ENCODE measurements at regions of chr13 and their contacts with region 1.

Region 1: GRCh38 chr13:109786457-109787134 is at the start of gene IRS2:
- DNase-seq: peak; percentile 95 to 99 (median 97)
- H3K4me3 ChIP-seq: peak within 1 kb of the TSS; percentile 51 to 82 (median 64)
- H3K27ac ChIP-seq: peak within 1 kb of the TSS; percentile 69 to 98 (median 91)
- H3K4me1 ChIP-seq: peaks cover 18 to 54% of the 10 kb centered on the region in 2 donors
- H3K27me3 ChIP-seq: no peaks in the 10 kb centered on the region
- CTCF ChIP-seq: peak in 1 of 6 experiments; percentile 20
- POLR2A ChIP-seq: peak; percentile 99 to 100
- total RNA-seq, gene IRS2: 11.0 to 84.2 (median 49.4) TPM

Region 2: GRCh38 chr13:108961542-108962125 is 825.0 kb before region 1 on chr13:
- intact Hi-C with region 1: loop called in 1 of 2 experiments (anchors 5 kb)
- DNase-seq: peak in 2 of 7 donors; percentile 19 to 37
- H3K4me3 ChIP-seq: no peak overlapping the region
- H3K27ac ChIP-seq: no peak overlapping the region
- H3K4me1 ChIP-seq: peaks cover 6 to 12% of the 10 kb centered on the region in 2 donors
- H3K27me3 ChIP-seq: no peaks in the 10 kb centered on the region
- CTCF ChIP-seq: peak; percentile 82 to 93 (median 87)
- POLR2A ChIP-seq: no peak

Region 3: DNA sequence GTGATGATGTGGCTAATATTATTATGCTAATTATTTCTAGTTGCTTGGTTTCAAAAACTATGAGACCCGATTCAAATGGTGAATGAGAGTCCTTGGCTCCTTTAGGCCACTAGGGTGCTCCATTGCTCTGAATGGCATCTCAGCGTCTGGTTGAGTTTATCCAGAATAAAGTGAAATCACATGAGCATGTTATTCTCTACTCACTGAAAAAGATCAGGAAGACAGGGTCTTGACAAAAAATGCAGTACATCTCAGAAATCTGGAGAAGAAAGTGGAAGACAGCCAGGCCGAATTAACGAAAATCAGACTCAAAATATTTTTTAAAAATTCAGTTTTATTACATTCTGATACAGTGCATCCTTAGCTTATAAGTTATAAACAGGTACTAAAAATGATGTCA is 641.0 kb before region 1 on chr13:
- intact Hi-C with region 1: loop called (anchors 10 kb)
- DNase-seq: peak; percentile 48 to 82 (median 65)
- H3K4me3 ChIP-seq: no peak overlapping the region
- H3K27ac ChIP-seq: no peak overlapping the region
- H3K4me1 ChIP-seq: peaks cover 0 to 7% of the 10 kb centered on the region in 2 donors
- H3K27me3 ChIP-seq: no peaks in the 10 kb centered on the region
- CTCF ChIP-seq: peak; percentile 72 to 84 (median 78)
- POLR2A ChIP-seq: no peak

Region 4: DNA sequence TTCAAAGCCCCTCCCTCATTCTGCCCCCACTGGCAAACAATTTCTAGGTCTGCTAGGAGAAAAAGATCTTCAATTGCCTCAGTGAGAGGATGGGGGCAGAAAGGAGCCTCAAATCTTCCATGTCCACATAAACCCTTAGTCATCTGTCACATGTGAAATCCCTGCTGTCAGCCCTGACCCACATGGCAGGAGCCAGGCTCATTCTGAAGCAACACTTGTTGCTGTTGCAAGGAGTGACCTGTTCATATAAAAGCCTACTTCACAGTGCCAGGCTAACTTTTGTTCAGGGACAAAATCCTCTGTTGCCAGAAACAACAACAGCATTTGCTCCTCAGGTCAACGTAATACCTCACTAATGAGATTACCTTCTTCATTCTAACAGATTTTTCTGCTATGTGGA is 70.7 kb before region 1 on chr13:
- intact Hi-C with region 1: loop called (anchors 10 kb)
- DNase-seq: peak; percentile 80 to 94 (median 92)
- H3K4me3 ChIP-seq: no peak overlapping the region
- H3K27ac ChIP-seq: peak overlapping the region; percentile 26 to 73 (median 56)
- H3K4me1 ChIP-seq: peaks cover 32 to 40% of the 10 kb centered on the region in 2 donors
- H3K27me3 ChIP-seq: no peaks in the 10 kb centered on the region
- CTCF ChIP-seq: peak in 4 of 6 experiments; percentile 5 to 41 (median 22)
- POLR2A ChIP-seq: peak in 1 of 2 donors; percentile 74

Region 5: DNA sequence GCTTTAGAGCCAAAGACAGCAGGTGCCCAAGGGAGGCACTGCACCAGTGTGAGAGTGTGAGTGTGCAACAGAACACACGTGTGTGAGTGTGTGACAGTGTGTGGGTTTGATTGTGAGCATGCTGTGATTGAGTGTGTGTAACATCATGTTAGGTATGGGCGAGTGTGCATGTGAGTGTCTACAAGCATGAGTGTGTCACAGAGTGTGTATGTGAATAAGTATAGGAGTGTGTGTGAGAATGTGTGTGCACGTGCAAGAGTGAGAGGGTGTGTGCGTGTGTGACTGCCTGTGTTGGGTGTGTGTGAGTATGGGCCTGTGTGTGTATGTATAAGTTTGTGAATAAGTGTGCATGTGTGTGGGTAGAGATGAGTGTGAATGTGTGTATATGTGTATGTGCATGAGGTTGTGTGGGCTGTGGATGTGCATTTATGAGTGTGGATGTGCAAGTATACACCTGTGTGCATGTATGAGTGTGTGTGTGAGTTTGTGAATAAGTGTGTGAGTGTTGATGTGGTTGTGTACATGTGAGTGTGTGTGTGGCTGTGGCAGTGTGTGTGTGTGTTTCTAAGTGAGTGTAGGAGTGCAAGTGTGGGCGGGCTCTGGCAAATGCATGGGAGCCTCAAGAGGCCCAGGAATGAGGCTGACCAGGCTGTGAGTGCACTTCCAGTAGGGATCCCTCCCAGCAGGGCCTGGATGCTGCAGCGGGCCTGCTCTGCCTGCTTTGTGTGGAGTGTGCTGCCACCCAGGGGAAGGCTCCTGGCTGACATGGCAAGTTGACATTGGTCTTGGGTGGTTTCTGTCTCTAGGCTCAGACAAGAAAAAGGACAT is 322.0 kb after region 1 on chr13:
- intact Hi-C with region 1: loop called (anchors 5 to 10 kb)
- DNase-seq: peak; percentile 85 to 94 (median 90)
- H3K4me3 ChIP-seq: no peak overlapping the region
- H3K27ac ChIP-seq: peak overlapping the region in 3 of 5 donors; percentile 63 to 69 (median 68)
- H3K4me1 ChIP-seq: peaks cover 23 to 38% of the 10 kb centered on the region in 2 donors
- H3K27me3 ChIP-seq: no peaks in the 10 kb centered on the region
- CTCF ChIP-seq: peak; percentile 53 to 91 (median 84)
- POLR2A ChIP-seq: no peak

Region 6: DNA sequence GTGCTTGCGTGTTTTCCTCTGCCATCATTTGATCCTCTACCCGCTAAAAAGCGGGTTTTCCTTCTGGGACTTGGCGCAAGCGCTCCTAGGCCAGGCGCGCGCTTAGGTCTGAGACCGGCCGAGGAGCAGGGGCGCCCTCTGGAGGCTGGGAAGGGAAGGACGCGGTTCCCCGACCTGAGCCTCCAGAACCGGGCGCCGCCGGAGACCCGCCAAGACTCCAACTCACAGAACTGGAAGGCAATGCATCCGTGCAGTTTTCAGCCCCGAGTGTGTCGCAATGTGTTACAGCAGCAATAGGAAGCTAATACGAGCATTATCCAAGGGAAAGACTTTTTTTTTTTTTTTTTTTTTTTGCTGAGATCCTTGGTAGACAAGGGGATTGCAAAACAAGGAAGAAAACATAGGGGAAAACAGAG is 329.5 kb after region 1 on chr13:
- intact Hi-C with region 1: loop called in 1 of 2 experiments (anchors 10 kb)
- DNase-seq: peak; percentile 45 to 74 (median 67)
- H3K4me3 ChIP-seq: no peak overlapping the region
- H3K27ac ChIP-seq: no peak overlapping the region
- H3K4me1 ChIP-seq: no peaks in the 10 kb centered on the region
- H3K27me3 ChIP-seq: no peaks in the 10 kb centered on the region
- CTCF ChIP-seq: peak; percentile 58 to 80 (median 70)
- POLR2A ChIP-seq: no peak